ENCODE measurements at regions of chr7 and their contacts with region 1.

Region 1: DNA sequence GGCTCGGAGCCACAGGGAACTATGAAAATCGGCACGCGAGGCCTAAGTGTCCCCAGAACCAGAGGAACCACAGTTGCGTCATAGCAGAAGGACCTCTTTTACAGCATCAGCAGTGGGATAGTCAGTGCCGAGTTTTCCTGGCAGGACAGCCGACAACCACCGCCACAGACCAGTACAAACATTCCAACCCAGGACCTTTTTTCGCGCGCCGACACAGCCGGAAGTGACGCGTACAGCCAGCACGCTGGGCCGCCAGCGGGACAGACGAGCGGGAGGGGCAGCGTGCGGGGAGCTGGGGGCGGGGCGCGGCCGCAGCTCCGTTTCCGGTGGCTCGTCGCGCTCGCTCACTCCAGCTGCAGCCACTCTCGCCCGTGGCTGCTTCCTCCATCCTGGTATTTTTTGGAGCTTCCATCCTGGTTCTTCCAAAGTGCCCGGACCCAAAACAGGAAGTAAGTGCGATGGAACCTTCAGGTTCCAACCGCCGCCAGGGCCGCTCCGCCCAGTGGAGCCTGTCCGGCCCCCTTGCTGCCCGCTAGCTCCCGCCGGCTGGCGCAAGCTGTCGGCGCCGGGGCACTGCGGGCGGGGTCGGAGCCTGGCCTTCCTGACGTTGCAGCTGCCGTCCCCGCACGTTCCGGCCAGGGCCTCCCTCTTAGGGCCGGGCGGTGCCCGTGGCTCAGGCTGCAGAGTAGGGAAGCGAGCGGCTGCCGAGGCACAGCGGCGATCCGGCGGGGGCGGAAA is at the start of gene DMTF1:
- DNase-seq: peak; percentile 72 to 94 (median 80)
- ATAC-seq: peak; percentile 76
- H3K4me3 ChIP-seq: peak within 1 kb of the TSS; percentile 74
- H3K4me3 Mint-ChIP-seq: peak within 1 kb of the TSS; percentile 96
- H3K27ac ChIP-seq: peak within 1 kb of the TSS; percentile 87 to 90
- H3K27ac Mint-ChIP-seq: peak within 1 kb of the TSS; percentile 97
- H3K4me1 ChIP-seq: peaks cover 9% of the 10 kb centered on the region
- H3K4me1 Mint-ChIP-seq: peaks cover 54% of the 10 kb centered on the region
- H3K27me3 ChIP-seq: no peaks in the 10 kb centered on the region
- H3K27me3 Mint-ChIP-seq: no peaks in the 10 kb centered on the region
- CTCF ChIP-seq: no peak
- total RNA-seq, gene DMTF1: 114 to 115 TPM

Region 2: GRCh38 chr7:86939197-86939814 is 213.0 kb before region 1 on chr7:
- CTCF ChIA-PET with region 1: interaction called, 3 read pairs
- POLR2A ChIA-PET with region 1: no interaction called
- intact Hi-C with region 1: loop called (anchors 1 to 2 kb)
- DNase-seq: peak in 9 of 14 experiments; percentile 9 to 75 (median 30)
- ATAC-seq: peak; percentile 71
- H3K4me3 ChIP-seq: no peak overlapping the region
- H3K4me3 Mint-ChIP-seq: no peak overlapping the region
- H3K27ac ChIP-seq: no peak overlapping the region
- H3K27ac Mint-ChIP-seq: no peak overlapping the region
- H3K4me1 ChIP-seq: no peaks in the 10 kb centered on the region
- H3K4me1 Mint-ChIP-seq: no peaks in the 10 kb centered on the region
- H3K27me3 ChIP-seq: no peaks in the 10 kb centered on the region
- H3K27me3 Mint-ChIP-seq: peaks cover 9% of the 10 kb centered on the region
- CTCF ChIP-seq: peak; percentile 69

Region 3: DNA sequence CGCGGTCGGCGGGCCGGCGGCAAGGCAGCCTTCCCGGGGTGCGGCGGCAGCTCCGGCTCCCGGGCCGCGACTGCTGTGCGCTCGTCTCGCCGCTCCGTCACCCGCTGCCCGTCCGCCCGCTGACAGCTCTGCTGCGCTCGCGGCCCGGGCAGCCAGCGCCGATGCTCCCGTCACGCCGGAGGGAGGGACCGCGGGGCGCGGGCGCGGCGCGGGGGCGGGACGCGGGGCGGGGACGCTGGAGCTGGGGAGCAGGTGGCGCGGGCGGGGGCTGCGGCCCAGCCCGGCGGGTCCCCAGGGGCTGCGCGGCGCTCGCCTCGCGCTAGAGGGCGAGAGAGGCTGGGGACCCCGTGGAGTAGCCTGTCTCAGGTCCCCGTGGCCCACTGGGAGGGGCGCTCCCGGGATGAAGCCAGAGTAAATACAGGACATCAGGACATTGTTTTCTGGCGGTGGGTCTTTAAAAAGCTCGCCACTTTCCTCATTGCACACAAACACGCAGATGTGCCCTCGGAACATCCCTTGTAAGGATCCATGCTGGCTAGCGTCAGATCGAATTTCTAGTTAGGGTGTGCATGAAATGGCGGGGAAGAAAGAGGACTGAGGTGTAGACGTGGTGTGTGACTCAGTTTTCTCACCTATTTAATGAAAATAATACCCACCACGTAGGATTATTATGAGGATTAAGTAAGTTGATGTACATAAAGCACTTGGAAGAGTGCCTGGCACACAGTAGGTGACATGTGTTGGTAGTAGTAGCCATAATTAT is 92.6 kb before region 1 on chr7 and contains the start of gene ELAPOR2:
- CTCF ChIA-PET with region 1: interaction called, 12 read pairs
- POLR2A ChIA-PET with region 1: interaction called, 22 read pairs
- intact Hi-C with region 1: loop called (anchors 2 to 5 kb)
- DNase-seq: peak; percentile 61 to 91 (median 76)
- ATAC-seq: peak; percentile 93
- H3K4me3 ChIP-seq: peak within 1 kb of the TSS; percentile 66
- H3K4me3 Mint-ChIP-seq: peak within 1 kb of the TSS; percentile 92
- H3K27ac ChIP-seq: no peak within 1 kb of the TSS
- H3K27ac Mint-ChIP-seq: peak within 1 kb of the TSS; percentile 75
- H3K4me1 ChIP-seq: peaks cover 12% of the 10 kb centered on the region
- H3K4me1 Mint-ChIP-seq: peaks cover 13% of the 10 kb centered on the region
- H3K27me3 ChIP-seq: peaks cover 0 to 3% of the 10 kb centered on the region in 2 experiments
- H3K27me3 Mint-ChIP-seq: peaks cover 13% of the 10 kb centered on the region
- CTCF ChIP-seq: peak; percentile 46
- total RNA-seq, gene ELAPOR2: 7.2 to 7.7 TPM

Region 4: DNA sequence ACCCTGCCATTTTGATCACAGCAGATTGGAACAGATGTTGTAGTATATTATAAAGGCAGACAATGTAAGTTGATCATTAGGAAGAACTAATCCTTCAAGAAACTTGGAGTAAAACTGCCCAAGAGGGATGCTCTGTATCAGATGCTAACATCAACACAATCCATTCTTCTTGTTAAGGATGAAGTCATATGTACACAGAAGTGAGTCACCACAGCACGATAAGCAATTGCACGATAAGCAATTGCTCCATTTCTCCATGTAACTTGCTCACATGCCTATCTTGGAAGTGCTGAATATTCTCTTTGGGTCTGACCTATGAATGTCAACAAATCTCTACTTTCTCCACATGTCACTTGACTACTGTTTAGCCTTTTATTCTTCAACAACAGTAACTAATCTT is 41.5 kb before region 1 on chr7:
- CTCF ChIA-PET with region 1: no interaction called
- POLR2A ChIA-PET with region 1: no interaction called
- intact Hi-C with region 1: no loop called
- DNase-seq: no peak
- ATAC-seq: no peak
- H3K4me3 ChIP-seq: no peak overlapping the region
- H3K4me3 Mint-ChIP-seq: no peak overlapping the region
- H3K27ac ChIP-seq: no peak overlapping the region
- H3K27ac Mint-ChIP-seq: no peak overlapping the region
- H3K4me1 ChIP-seq: no peaks in the 10 kb centered on the region
- H3K4me1 Mint-ChIP-seq: no peaks in the 10 kb centered on the region
- H3K27me3 ChIP-seq: peaks cover 0 to 15% of the 10 kb centered on the region in 2 experiments
- H3K27me3 Mint-ChIP-seq: peaks cover 9% of the 10 kb centered on the region
- CTCF ChIP-seq: no peak

Region 5: DNA sequence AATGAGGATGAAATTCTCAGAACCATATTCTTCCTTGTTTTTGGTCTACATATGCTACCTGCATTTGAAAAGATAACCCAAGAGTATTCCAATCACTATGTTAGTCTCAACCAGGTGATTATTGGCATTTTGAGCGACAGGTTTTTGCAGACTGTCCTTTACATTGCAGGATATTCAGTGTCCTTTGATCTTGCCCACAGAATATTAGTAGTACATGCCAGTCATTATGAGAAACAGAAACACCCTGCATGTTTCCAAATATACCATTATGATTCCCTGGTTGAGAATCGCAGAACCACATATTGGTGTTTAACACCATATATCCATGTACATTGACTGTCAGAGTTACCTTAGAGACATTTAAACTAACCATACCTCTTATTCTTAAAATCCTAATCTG is 36.7 kb after region 1 on chr7:
- CTCF ChIA-PET with region 1: interaction called, 4 read pairs
- POLR2A ChIA-PET with region 1: interaction called, 10 read pairs
- intact Hi-C with region 1: no loop called
- DNase-seq: no peak
- ATAC-seq: no peak
- H3K4me3 ChIP-seq: no peak overlapping the region
- H3K4me3 Mint-ChIP-seq: no peak overlapping the region
- H3K27ac ChIP-seq: no peak overlapping the region
- H3K27ac Mint-ChIP-seq: peak overlapping the region; percentile 68
- H3K4me1 ChIP-seq: no peaks in the 10 kb centered on the region
- H3K4me1 Mint-ChIP-seq: peaks cover 61% of the 10 kb centered on the region
- H3K27me3 ChIP-seq: no peaks in the 10 kb centered on the region
- H3K27me3 Mint-ChIP-seq: no peaks in the 10 kb centered on the region
- CTCF ChIP-seq: no peak

Region 6: GRCh38 chr7:87219545-87220025 is 67.3 kb after region 1 on chr7 and contains the start of gene TMEM243:
- CTCF ChIA-PET with region 1: interaction called, 12 read pairs
- POLR2A ChIA-PET with region 1: interaction called, 357 read pairs
- intact Hi-C with region 1: loop called (anchors 1 to 2 kb)
- DNase-seq: peak; percentile 71 to 93 (median 82)
- ATAC-seq: peak; percentile 65
- H3K4me3 ChIP-seq: peak within 1 kb of the TSS; percentile 89
- H3K4me3 Mint-ChIP-seq: peak within 1 kb of the TSS; percentile 100
- H3K27ac ChIP-seq: peak within 1 kb of the TSS; percentile 83 to 97
- H3K27ac Mint-ChIP-seq: peak within 1 kb of the TSS; percentile 92
- H3K4me1 ChIP-seq: peaks cover 41% of the 10 kb centered on the region
- H3K4me1 Mint-ChIP-seq: peaks cover 47% of the 10 kb centered on the region
- H3K27me3 ChIP-seq: no peaks in the 10 kb centered on the region
- H3K27me3 Mint-ChIP-seq: no peaks in the 10 kb centered on the region
- CTCF ChIP-seq: peak; percentile 31
- total RNA-seq, gene TMEM243: 158 to 161 TPM

Region 7: DNA sequence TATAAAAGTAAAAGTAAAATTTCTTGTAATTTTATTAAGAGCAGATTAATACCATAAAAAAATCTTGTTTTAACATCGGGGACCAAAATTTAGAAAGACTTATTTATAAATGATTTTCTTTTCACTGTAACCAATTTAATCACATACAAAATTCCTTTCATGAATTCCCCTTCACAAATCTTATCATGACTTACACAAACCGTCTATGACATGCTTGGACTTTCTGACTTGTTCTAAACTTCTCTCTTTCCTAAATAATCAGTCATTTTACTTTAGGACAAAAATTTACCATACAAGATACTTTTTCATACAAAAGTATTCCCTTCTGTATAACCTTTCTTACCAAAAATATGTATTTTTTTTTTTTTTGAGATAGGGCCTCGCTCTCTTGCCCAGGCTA is 202.5 kb after region 1 on chr7:
- CTCF ChIA-PET with region 1: no interaction called
- POLR2A ChIA-PET with region 1: no interaction called
- intact Hi-C with region 1: loop called in 1 of 2 experiments (anchors 5 kb)
- DNase-seq: peak in 1 of 14 experiments; percentile 2
- ATAC-seq: no peak
- H3K4me3 ChIP-seq: no peak overlapping the region
- H3K4me3 Mint-ChIP-seq: no peak overlapping the region
- H3K27ac ChIP-seq: no peak overlapping the region
- H3K27ac Mint-ChIP-seq: no peak overlapping the region
- H3K4me1 ChIP-seq: no peaks in the 10 kb centered on the region
- H3K4me1 Mint-ChIP-seq: no peaks in the 10 kb centered on the region
- H3K27me3 ChIP-seq: no peaks in the 10 kb centered on the region
- H3K27me3 Mint-ChIP-seq: no peaks in the 10 kb centered on the region
- CTCF ChIP-seq: no peak

Measured in CD4-positive, alpha-beta T cell (primary cell).